ENCODE measurements at regions of chr9 and their contacts with region 1.

Region 1: GRCh38 chr9:87662808-87663528 is 63.0 kb upstream of the CTSL start:
- DNase-seq: no peak
- H3K4me3 ChIP-seq: no peak overlapping the region
- H3K27ac ChIP-seq: no peak overlapping the region
- H3K4me1 ChIP-seq: no peaks in the 10 kb centered on the region
- H3K27me3 ChIP-seq: no peaks in the 10 kb centered on the region
- CTCF ChIP-seq: peak; percentile 26 to 75 (median 66)
- POLR2A ChIP-seq: no peak

Region 2: DNA sequence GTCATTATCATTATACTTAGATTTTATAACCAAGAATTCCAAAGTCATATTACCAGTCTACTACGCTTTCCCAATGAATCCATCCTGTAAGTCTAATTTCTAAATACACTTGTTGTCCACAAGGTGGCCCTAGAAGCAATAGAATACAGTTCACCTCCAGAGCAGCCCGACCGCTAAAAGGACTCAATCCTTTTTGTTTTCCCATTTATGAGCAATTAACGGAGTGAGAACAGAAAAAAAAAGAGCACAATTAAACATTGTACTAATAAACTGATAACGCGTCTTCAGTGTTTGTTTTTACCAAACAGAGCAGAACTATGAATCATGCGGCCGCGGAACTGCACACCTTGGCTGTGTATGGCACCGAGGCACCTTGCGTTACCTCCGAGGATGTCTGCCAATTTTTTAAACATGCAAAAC is 326.0 kb before region 1 on chr9:
- intact Hi-C with region 1: loop called (anchors 5 kb)
- DNase-seq: no peak
- H3K4me3 ChIP-seq: peak overlapping the region in 4 of 8 donors; percentile 13 to 53 (median 24)
- H3K27ac ChIP-seq: no peak overlapping the region
- H3K4me1 ChIP-seq: peaks cover 0 to 14% (median 9%) of the 10 kb centered on the region in 6 donors
- H3K27me3 ChIP-seq: peaks cover 0 to 32% (median 0%) of the 10 kb centered on the region in 7 donors
- CTCF ChIP-seq: peak in 10 of 11 experiments; percentile 24 to 61 (median 55)
- POLR2A ChIP-seq: no peak

Region 3: DNA sequence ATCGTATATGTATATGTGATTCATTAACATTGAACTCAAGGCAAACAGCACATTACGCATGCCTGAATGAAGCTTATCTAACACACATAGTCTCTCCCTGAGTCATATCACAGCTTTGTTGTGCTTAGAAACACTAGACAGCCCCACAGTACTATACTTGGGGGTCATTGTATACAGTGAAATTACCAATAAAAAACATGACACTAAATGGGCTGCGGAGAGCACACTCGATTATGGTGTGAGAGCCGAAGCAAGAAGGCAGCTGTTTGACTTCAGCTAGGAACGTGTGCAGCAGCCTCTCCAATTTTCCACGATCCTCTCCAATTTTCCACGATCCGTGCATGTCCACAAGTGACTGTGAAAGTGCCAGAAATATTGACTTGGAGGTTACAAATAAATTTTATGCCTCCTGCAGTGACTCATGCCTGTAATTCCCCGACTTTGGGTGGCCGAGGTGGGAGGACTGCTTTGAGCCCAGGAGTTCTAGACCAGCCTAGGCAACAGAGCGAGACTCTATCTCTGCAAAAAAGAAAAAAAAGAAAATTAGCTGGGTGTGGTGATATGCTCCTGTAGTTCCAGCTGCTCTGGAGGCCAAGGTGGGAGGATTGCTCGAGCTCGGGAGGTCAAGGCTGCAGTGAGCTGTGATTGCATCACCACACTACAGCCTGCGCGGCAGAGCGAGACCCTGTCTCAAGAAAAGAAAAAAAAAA is 62.9 kb before region 1 on chr9:
- intact Hi-C with region 1: no loop called
- DNase-seq: no peak
- H3K4me3 ChIP-seq: no peak overlapping the region
- H3K27ac ChIP-seq: peak overlapping the region in 4 of 8 donors; percentile 56 to 87 (median 80)
- H3K4me1 ChIP-seq: peaks cover 0 to 40% (median 14%) of the 10 kb centered on the region in 6 donors
- H3K27me3 ChIP-seq: no peaks in the 10 kb centered on the region
- CTCF ChIP-seq: no peak
- POLR2A ChIP-seq: no peak

Measured in spleen (tissue), 13 donors.